ENCODE measurements at regions of chr7 and their contacts with region 1.

Region 1: DNA sequence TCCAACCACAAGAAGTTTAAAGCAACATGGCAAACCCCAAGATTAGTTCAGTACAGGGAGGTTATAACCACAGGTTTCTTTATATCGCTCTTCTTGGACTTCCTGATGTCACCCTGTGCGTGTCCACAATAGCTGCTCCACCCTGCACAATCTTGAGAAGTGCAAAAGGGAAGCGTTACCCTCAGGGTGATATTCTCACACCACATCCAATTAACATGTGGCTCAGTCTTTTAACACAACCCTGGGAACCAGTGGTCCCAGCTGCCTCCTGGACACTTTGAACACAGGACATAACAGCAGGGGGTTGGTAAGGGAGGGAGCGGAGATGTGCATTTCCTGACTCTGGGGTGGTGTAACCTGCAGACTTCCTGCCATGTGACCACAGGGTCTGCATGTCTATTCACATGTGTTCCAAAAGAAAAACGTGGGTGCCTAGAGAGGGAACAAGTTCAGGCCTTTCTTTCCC is 64.6 kb downstream of the GSAP start:
- DNase-seq: peak; percentile 64 to 86
- ATAC-seq: peak; percentile 80 to 94 (median 90)
- H3K4me3 ChIP-seq: no peak overlapping the region
- H3K4me3 Mint-ChIP-seq: peak overlapping the region; percentile 80
- H3K27ac ChIP-seq: peak overlapping the region; percentile 83
- H3K27ac Mint-ChIP-seq: peak overlapping the region; percentile 94 to 96
- H3K4me1 ChIP-seq: peaks cover 57% of the 10 kb centered on the region
- H3K4me1 Mint-ChIP-seq: peaks cover 78 to 85% of the 10 kb centered on the region in 2 donors
- H3K27me3 ChIP-seq: no peaks in the 10 kb centered on the region
- H3K27me3 Mint-ChIP-seq: no peaks in the 10 kb centered on the region
- CTCF ChIP-seq: no peak

Region 2: DNA sequence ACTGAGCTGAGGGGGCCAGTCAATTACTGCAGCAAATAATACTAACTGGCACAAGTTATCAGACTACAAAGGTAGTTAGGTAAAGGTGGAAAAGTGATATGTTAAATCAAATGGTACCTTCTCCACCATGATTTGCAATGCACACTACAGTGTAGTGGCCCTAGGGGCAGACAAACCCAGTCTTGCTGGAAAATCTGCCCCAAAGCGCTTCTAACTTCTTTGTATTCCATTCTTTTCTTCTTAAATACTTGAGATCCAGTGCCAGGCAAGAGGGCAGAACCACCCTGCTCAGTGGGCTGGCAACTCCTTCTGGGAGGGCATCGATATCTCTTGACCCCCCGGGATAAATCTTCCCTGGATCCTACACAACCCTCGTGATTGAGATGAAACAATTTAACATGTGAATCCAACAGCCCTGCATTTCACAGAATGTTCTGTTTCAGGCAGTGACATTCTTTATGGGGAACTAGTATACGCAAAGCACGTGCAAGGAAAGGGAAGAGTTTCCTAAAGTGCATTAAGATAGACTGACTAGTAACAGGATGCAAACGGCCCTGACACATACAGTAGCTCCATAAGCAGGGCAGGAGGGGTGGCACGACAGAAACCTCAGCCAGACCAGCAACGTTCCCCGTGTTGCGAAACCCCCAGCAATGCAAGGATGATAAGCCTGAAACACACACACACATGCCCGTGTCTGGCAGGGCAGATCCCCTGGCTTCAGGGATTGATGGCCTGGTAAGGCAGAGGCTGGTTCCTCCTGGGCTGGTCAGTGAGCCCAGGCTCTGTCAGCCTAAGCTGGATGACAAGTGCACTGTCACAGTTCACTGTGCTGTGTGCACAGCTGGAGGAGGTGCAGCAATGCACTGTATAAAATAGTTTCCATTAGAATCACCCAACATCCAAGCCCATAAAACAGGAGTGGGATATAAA is 24.6 kb before region 1 on chr7:
- intact Hi-C with region 1: loop called (anchors 1 kb)
- DNase-seq: peak in 1 of 2 donors; percentile 35
- ATAC-seq: peak in 1 of 3 donors; percentile 29
- H3K4me3 ChIP-seq: no peak overlapping the region
- H3K4me3 Mint-ChIP-seq: peak overlapping the region; percentile 91
- H3K27ac ChIP-seq: peak overlapping the region; percentile 58
- H3K27ac Mint-ChIP-seq: peak overlapping the region; percentile 97
- H3K4me1 ChIP-seq: peaks cover 53% of the 10 kb centered on the region
- H3K4me1 Mint-ChIP-seq: peaks cover 84 to 88% of the 10 kb centered on the region in 2 donors
- H3K27me3 ChIP-seq: no peaks in the 10 kb centered on the region
- H3K27me3 Mint-ChIP-seq: no peaks in the 10 kb centered on the region
- CTCF ChIP-seq: no peak

Region 3: DNA sequence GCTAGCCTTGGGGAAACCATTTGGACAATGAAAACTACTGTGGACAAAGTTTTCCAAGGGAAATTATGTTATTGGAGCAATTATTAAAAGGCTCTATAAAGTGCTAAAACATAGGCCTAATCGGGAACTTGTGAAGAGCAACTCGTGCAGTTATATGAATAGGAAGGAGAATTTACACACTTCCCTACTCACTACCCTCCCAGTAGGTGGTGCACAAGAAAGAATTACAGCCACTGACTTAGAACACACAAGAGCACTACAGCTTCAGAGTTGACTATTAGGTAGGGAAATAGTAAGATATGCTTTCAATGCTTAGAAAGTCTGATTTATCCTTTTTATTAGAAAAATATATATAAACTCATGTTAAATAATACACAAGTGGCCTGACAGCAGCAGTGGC is 17.4 kb after region 1 on chr7:
- intact Hi-C with region 1: loop called (anchors 2 kb)
- DNase-seq: no peak
- ATAC-seq: peak; percentile 47 to 68 (median 50)
- H3K4me3 ChIP-seq: no peak overlapping the region
- H3K4me3 Mint-ChIP-seq: no peak overlapping the region
- H3K27ac ChIP-seq: no peak overlapping the region
- H3K27ac Mint-ChIP-seq: peak overlapping the region in 1 of 2 donors; percentile 97
- H3K4me1 ChIP-seq: peaks cover 5% of the 10 kb centered on the region
- H3K4me1 Mint-ChIP-seq: peaks cover 50 to 57% of the 10 kb centered on the region in 2 donors
- H3K27me3 ChIP-seq: no peaks in the 10 kb centered on the region
- H3K27me3 Mint-ChIP-seq: no peaks in the 10 kb centered on the region
- CTCF ChIP-seq: no peak

Region 4: GRCh38 chr7:77415823-77416622 is 64.5 kb after region 1 on chr7 and contains the start of gene GSAP:
- intact Hi-C with region 1: loop called (anchors 1 kb)
- DNase-seq: peak; percentile 57 to 74
- ATAC-seq: peak; percentile 68 to 82 (median 72)
- H3K4me3 ChIP-seq: peak within 1 kb of the TSS; percentile 84
- H3K4me3 Mint-ChIP-seq: peak within 1 kb of the TSS; percentile 89
- H3K27ac ChIP-seq: peak within 1 kb of the TSS; percentile 96
- H3K27ac Mint-ChIP-seq: peak within 1 kb of the TSS; percentile 95 to 99
- H3K4me1 ChIP-seq: peaks cover 24% of the 10 kb centered on the region
- H3K4me1 Mint-ChIP-seq: peaks cover 63 to 70% of the 10 kb centered on the region in 2 donors
- H3K27me3 ChIP-seq: no peaks in the 10 kb centered on the region
- H3K27me3 Mint-ChIP-seq: no peaks in the 10 kb centered on the region
- CTCF ChIP-seq: no peak
- total RNA-seq, gene GSAP: 202 to 302 (median 301) TPM

Region 5: DNA sequence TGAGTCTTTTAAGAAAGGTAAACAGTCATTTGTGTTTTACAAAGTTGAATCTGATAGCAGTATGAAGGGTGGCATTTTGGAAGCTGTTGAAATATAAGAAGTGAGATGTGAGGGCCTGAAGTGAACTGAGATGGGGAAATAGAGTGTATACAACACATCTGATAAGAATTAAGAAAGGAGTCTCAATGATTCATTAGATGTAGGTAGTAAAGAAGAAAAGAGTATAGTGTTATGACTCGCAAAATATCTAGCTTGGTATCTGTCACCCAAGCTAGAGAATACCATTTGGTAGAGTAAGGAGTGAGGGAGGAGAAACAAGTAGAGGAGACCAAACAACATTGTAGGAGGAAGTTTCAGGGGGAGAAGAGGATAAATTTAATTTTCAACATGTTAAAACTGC is 190.8 kb after region 1 on chr7:
- intact Hi-C with region 1: loop called (anchors 2 kb)
- DNase-seq: no peak
- ATAC-seq: peak in 2 of 3 donors; percentile 12 to 18
- H3K4me3 ChIP-seq: no peak overlapping the region
- H3K4me3 Mint-ChIP-seq: peak overlapping the region; percentile 77
- H3K27ac ChIP-seq: peak overlapping the region; percentile 44
- H3K27ac Mint-ChIP-seq: peak overlapping the region; percentile 80 to 82
- H3K4me1 ChIP-seq: peaks cover 41% of the 10 kb centered on the region
- H3K4me1 Mint-ChIP-seq: peaks cover 68 to 77% of the 10 kb centered on the region in 2 donors
- H3K27me3 ChIP-seq: no peaks in the 10 kb centered on the region
- H3K27me3 Mint-ChIP-seq: no peaks in the 10 kb centered on the region
- CTCF ChIP-seq: no peak

Region 6: GRCh38 chr7:77561352-77561751 is 209.8 kb after region 1 on chr7:
- intact Hi-C with region 1: loop called (anchors 5 kb)
- DNase-seq: peak in 1 of 2 donors; percentile 36
- ATAC-seq: peak; percentile 40 to 65 (median 64)
- H3K4me3 ChIP-seq: no peak overlapping the region
- H3K4me3 Mint-ChIP-seq: peak overlapping the region; percentile 85
- H3K27ac ChIP-seq: peak overlapping the region; percentile 69
- H3K27ac Mint-ChIP-seq: peak overlapping the region; percentile 97 to 99
- H3K4me1 ChIP-seq: peaks cover 44% of the 10 kb centered on the region
- H3K4me1 Mint-ChIP-seq: peaks cover 79 to 84% of the 10 kb centered on the region in 2 donors
- H3K27me3 ChIP-seq: no peaks in the 10 kb centered on the region
- H3K27me3 Mint-ChIP-seq: no peaks in the 10 kb centered on the region
- CTCF ChIP-seq: no peak

Measured in natural killer cell (primary cell).